Right cardiac atrium (tissue), 5 donors: ENCODE measurements at regions of chr6 and their contacts with region 1.

Region 1: GRCh38 chr6:47787620-47788497 is 6.0 kb downstream of the OPN5 start:
- DNase-seq: peak; percentile 36 to 82 (median 70)
- ATAC-seq: peak; percentile 54 to 60
- H3K4me3 ChIP-seq: no peak overlapping the region
- H3K27ac ChIP-seq: no peak overlapping the region
- H3K4me1 ChIP-seq: no peaks in the 10 kb centered on the region
- H3K27me3 ChIP-seq: no peaks in the 10 kb centered on the region

Region 2: DNA sequence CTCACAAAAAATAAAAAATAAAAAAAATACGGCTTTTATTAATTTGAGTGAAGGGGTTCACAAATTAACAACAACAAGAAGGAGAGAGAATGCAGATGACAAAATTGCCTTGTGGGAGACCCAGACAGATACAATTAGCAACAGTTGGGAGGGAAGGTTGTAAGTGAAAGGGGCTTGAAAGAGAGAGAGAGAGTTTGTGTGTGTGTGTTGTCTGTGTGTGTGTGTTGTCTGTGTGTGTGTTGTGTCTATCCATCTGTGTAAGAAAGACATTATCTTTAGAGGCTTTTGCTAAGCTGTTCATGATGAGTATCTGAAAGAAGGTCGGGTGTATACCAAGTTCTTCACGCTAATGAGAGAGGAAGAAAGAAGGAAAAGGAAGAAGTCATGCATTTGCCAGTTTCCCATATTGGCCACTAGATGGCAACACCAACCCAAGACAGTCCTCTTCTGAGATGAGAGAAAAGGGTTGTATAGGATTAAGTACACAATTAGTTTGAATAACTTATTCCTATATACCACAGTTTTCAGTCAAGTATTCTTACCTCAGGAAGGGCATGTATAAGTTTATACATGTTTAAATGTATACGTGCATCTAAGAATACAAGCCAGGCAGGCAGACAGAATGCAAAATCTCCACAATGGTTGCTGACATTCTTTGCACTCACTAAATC is 374.0 kb before region 1 on chr6:
- intact Hi-C with region 1: loop called in 2 of 4 experiments (anchors 10 kb)
- DNase-seq: peak in 1 of 3 donors; percentile 11
- ATAC-seq: peak; percentile 89 to 90
- H3K4me3 ChIP-seq: peak overlapping the region; percentile 54
- H3K27ac ChIP-seq: no peak overlapping the region
- H3K4me1 ChIP-seq: no peaks in the 10 kb centered on the region
- H3K27me3 ChIP-seq: no peaks in the 10 kb centered on the region

Region 3: DNA sequence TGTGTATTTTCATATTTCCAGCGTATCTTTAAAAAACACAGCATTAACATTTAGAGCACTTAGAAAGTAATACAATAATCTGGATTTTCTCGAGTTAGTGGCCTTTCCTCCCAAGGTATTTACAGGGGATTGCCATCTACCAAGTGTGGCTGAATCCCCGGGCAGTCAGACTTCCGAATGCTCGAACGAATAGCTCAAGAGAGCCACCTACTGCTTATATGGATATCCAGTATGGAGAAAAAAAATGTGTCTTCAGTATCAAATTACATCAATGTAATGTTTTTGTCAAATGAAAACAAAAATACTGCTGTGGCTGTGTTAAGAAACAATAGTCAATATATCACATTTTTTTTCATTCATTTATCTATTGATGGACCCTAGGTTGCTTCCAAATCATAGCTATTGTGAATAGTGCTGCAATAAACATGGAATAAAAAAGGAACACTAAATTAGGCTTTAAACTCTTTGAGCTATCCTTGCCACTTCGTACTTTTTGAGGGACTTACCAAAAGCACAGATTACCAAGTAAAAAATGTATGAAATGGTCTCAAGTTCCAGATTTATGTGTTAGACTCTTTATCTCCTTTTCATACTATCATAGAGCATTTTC is 977.6 kb after region 1 on chr6:
- intact Hi-C with region 1: loop called in 2 of 4 experiments (anchors 5 to 10 kb)
- DNase-seq: peak in 2 of 3 donors; percentile 12 to 20
- ATAC-seq: peak in 1 of 2 donors; percentile 64
- H3K4me3 ChIP-seq: no peak overlapping the region
- H3K27ac ChIP-seq: no peak overlapping the region
- H3K4me1 ChIP-seq: no peaks in the 10 kb centered on the region
- H3K27me3 ChIP-seq: no peaks in the 10 kb centered on the region

Region 4: GRCh38 chr6:49409951-49410542 is 1622.2 kb after region 1 on chr6:
- intact Hi-C with region 1: loop called in 2 of 4 experiments (anchors 5 kb)
- DNase-seq: peak; percentile 47 to 82 (median 54)
- ATAC-seq: peak; percentile 54 to 72
- H3K4me3 ChIP-seq: no peak overlapping the region
- H3K27ac ChIP-seq: no peak overlapping the region
- H3K4me1 ChIP-seq: no peaks in the 10 kb centered on the region
- H3K27me3 ChIP-seq: no peaks in the 10 kb centered on the region